ENCODE measurements at regions of chr3 and their contacts with region 1.

Region 1: GRCh38 chr3:114122027-114122709 is 56.7 kb downstream of the DRD3 start:
- DNase-seq: peak; percentile 92
- H3K4me3 ChIP-seq: peak overlapping the region in 1 of 3 experiments; percentile 3
- H3K27ac ChIP-seq: peak overlapping the region; percentile 66
- H3K4me1 ChIP-seq: peaks cover 20% of the 10 kb centered on the region
- H3K27me3 ChIP-seq: no peaks in the 10 kb centered on the region
- CTCF ChIP-seq: no peak
- POLR2A ChIP-seq: no peak

Region 2: GRCh38 chr3:113825090-113825489 is 297.1 kb before region 1 on chr3:
- CTCF ChIA-PET with region 1: no interaction called
- POLR2A ChIA-PET with region 1: no interaction called
- dilution Hi-C with region 1: no loop called
- intact Hi-C with region 1: loop called (anchors 2 kb)
- DNase-seq: peak; percentile 45
- H3K4me3 ChIP-seq: no peak overlapping the region
- H3K27ac ChIP-seq: no peak overlapping the region
- H3K4me1 ChIP-seq: peaks cover 10% of the 10 kb centered on the region
- H3K27me3 ChIP-seq: no peaks in the 10 kb centered on the region
- CTCF ChIP-seq: peak in 1 of 2 donors; percentile 20
- POLR2A ChIP-seq: no peak

Region 3: DNA sequence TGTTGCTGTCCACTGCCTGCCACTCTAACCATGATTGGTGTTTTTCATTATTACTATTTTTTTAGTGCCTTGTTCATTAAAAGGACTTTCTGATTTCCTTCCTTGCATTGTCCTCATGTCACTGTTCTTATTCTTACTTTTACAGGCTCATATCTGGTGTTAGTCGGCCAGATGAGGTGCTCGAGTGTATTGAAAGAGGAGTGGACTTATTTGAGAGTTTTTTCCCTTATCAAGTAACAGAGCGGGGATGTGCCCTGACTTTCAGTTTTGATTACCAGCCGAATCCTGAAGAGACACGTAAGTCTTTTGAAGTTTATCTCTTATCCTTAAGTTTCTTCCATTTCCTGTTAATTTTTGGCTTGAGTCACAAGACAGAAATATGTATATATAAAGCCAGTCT is 42.4 kb before region 1 on chr3:
- CTCF ChIA-PET with region 1: interaction called, 4 read pairs
- POLR2A ChIA-PET with region 1: interaction called, 3 read pairs
- dilution Hi-C with region 1: no loop called
- intact Hi-C with region 1: loop called (anchors 5 kb)
- DNase-seq: peak; percentile 88
- H3K4me3 ChIP-seq: peak overlapping the region in 2 of 3 experiments; percentile 29 to 55
- H3K27ac ChIP-seq: peak overlapping the region; percentile 63
- H3K4me1 ChIP-seq: peaks cover 22% of the 10 kb centered on the region
- H3K27me3 ChIP-seq: no peaks in the 10 kb centered on the region
- CTCF ChIP-seq: no peak
- POLR2A ChIP-seq: no peak

Region 4: GRCh38 chr3:114093596-114093995 is 28.6 kb before region 1 on chr3:
- CTCF ChIA-PET with region 1: interaction called, 4 read pairs
- POLR2A ChIA-PET with region 1: interaction called, 3 read pairs
- dilution Hi-C with region 1: no loop called
- intact Hi-C with region 1: loop called (anchors 1 kb)
- DNase-seq: peak; percentile 65
- H3K4me3 ChIP-seq: no peak overlapping the region
- H3K27ac ChIP-seq: peak overlapping the region; percentile 86
- H3K4me1 ChIP-seq: peaks cover 26% of the 10 kb centered on the region
- H3K27me3 ChIP-seq: no peaks in the 10 kb centered on the region
- CTCF ChIP-seq: no peak
- POLR2A ChIP-seq: no peak

Region 5: DNA sequence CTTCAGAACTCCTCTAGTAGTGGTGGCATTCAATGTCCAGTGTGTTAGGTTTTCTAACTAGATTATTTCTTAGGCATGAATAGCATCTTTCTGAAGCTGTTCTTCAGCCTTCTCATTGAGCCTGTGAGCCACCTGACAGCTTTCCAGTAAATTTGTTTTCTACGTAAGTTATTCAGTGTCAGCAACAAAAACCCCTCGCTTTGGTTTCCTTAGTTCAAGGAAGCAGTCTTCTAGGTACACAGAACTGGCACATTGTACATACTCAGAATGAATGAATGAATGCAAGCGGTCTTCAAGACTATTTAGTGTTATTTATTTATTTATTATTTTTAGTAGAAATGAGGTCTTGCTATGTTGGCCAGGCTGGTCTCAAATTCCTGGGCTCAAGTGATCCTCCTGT is 11.8 kb after region 1 on chr3:
- CTCF ChIA-PET with region 1: interaction called, 5 read pairs
- POLR2A ChIA-PET with region 1: no interaction called
- dilution Hi-C with region 1: no loop called
- intact Hi-C with region 1: loop called (anchors 1 kb)
- DNase-seq: no peak
- H3K4me3 ChIP-seq: no peak overlapping the region
- H3K27ac ChIP-seq: no peak overlapping the region
- H3K4me1 ChIP-seq: no peaks in the 10 kb centered on the region
- H3K27me3 ChIP-seq: no peaks in the 10 kb centered on the region
- CTCF ChIP-seq: no peak
- POLR2A ChIP-seq: no peak

Region 6: DNA sequence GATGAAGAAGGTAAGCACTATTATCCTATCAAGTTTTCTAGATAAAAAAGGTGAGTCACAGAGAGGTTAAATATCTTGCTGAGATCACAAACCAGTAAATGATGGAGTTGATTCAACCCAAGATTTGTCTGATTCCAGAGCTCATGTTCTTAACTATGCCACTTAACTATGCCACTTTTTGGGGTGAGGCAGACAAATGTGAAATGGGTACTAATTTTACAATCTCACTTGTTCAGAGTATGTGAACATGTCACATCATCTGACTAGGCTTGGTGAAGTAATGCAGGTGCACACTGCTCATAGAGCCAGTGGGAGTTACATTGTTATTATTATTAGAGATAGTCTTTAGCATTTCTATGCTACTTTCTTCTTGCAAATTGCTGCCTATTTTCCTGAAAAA is 54.7 kb after region 1 on chr3:
- CTCF ChIA-PET with region 1: no interaction called
- POLR2A ChIA-PET with region 1: no interaction called
- dilution Hi-C with region 1: no loop called
- intact Hi-C with region 1: no loop called
- DNase-seq: no peak
- H3K4me3 ChIP-seq: no peak overlapping the region
- H3K27ac ChIP-seq: no peak overlapping the region
- H3K4me1 ChIP-seq: no peaks in the 10 kb centered on the region
- H3K27me3 ChIP-seq: peaks cover 12 to 13% of the 10 kb centered on the region in 2 experiments
- CTCF ChIP-seq: no peak
- POLR2A ChIP-seq: no peak